BJ (cell line): ENCODE measurements at regions of chr7 and their contacts with region 1.

Region 1: GRCh38 chr7:158976849-158977593 is 120.7 kb downstream of the DYNC2I1 start:
- DNase-seq: no peak
- H3K4me3 ChIP-seq: peak overlapping the region; percentile 23
- H3K27me3 ChIP-seq: no peaks in the 10 kb centered on the region
- CTCF ChIP-seq: peak; percentile 87

Region 2: DNA sequence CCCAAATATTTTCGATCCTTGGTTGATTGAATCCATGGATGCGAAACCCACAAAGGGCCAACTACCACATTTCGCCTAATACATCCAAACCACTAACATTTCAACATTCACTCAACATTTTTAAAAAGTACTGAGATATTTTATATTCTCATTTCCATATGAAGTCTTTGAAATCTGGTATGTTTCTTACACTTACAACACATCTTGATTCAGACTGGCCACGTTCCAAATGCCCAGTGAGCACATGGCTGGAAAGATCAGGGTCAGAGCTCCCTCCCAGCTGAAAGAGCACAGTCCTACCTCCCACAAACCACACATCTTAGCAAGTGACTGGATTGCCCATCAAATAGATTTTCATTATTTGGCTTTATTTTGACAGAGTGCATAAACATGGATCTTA is 291.3 kb before region 1 on chr7:
- CTCF ChIA-PET with region 1: interaction called, 15 read pairs
- POLR2A ChIA-PET with region 1: no interaction called
- DNase-seq: no peak
- H3K4me3 ChIP-seq: no peak overlapping the region
- H3K27me3 ChIP-seq: no peaks in the 10 kb centered on the region
- CTCF ChIP-seq: no peak

Region 3: GRCh38 chr7:158695726-158696452 is 281.1 kb before region 1 on chr7:
- CTCF ChIA-PET with region 1: interaction called, 87 read pairs
- POLR2A ChIA-PET with region 1: no interaction called
- DNase-seq: no peak
- H3K4me3 ChIP-seq: no peak overlapping the region
- H3K27me3 ChIP-seq: no peaks in the 10 kb centered on the region
- CTCF ChIP-seq: peak; percentile 72

Region 4: GRCh38 chr7:158966780-158967390 is 10.1 kb before region 1 on chr7:
- CTCF ChIA-PET with region 1: interaction called, 20 read pairs
- POLR2A ChIA-PET with region 1: no interaction called
- DNase-seq: no peak
- H3K4me3 ChIP-seq: no peak overlapping the region
- H3K27me3 ChIP-seq: no peaks in the 10 kb centered on the region
- CTCF ChIP-seq: no peak

Region 5: GRCh38 chr7:158991824-158992583 is 15.0 kb after region 1 on chr7:
- CTCF ChIA-PET with region 1: interaction called, 18 read pairs
- POLR2A ChIA-PET with region 1: no interaction called
- DNase-seq: no peak
- H3K4me3 ChIP-seq: no peak overlapping the region
- H3K27me3 ChIP-seq: peaks cover 4% of the 10 kb centered on the region; the same call in 1 of the 2 replicates
- CTCF ChIP-seq: no peak